Left cardiac atrium (tissue), 4 donors: ENCODE measurements at regions of chrX and their contacts with region 1.

Region 1: DNA sequence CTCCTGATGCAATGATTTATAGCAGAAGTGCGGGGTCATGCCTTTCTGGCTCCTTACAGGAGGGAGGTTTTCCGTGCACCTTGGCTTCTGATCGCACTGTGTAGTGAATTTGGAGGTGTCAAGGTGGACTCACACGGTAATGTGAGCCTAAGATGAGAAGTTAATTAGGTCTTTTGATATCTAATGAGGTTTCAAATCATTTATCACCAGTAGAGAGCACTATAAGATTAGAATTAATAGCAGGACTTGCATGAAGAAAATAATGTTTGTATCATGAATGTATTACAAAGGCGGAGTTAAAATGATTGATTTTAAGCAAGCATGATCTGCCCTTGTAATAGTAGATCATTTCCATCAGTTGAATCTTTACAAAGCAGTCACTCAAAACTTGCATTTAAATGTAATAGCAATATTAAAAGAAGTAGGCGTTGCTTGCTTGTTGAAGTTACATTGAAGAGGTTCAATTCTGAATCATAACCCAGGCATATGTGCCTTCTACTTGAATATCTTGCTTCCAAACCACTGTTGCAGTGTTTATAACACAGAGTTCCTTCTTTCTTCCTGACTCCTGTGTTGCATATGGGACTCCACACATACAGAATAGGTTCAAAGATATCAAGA is 152.1 kb downstream of the FMR1NB start:
- DNase-seq: no peak
- ATAC-seq: no peak

Region 2: GRCh38 chrX:149286940-149287349 is 1153.7 kb after region 1 on chrX:
- intact Hi-C with region 1: loop called in 1 of 2 experiments (anchors 5 kb)
- DNase-seq: no peak
- ATAC-seq: no peak

Region 3: DNA sequence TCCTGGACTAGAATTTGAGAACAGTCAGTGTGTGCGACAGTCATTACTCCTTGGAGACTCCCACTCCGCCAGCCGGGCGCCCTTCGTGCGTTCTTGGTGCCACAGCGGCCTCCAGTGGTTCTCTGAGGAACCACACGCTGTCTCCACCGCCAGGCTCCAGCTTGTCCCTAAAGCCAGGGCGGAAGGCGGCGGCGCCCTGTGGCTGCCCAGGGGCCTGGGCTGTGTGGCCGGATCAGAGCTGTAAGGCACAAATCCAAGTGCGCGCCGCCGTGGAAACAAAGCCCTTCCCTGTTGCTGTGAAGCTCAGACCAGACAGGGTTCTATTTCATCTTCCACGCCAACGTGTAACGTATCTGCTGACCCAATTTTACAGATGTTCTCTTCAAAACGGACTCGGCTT is 1337.7 kb after region 1 on chrX:
- intact Hi-C with region 1: loop called in 1 of 2 experiments (anchors 5 kb)
- DNase-seq: peak; percentile 82
- ATAC-seq: peak; percentile 87 to 96